Activated naive CD4-positive, alpha-beta T cell treated with anti-CD3 and anti-CD28 coated beads for 36 hours (primary cell): ENCODE measurements at regions of chr2 and their contacts with region 1.

Region 1: GRCh38 chr2:225889446-225889850 is 489.9 kb downstream of the NYAP2 start:
- DNase-seq: no peak
- H3K4me3 Mint-ChIP-seq: no peak overlapping the region
- H3K27ac Mint-ChIP-seq: no peak overlapping the region
- H3K4me1 Mint-ChIP-seq: no peaks in the 10 kb centered on the region
- H3K27me3 Mint-ChIP-seq: peaks cover 14% of the 10 kb centered on the region

Region 2: DNA sequence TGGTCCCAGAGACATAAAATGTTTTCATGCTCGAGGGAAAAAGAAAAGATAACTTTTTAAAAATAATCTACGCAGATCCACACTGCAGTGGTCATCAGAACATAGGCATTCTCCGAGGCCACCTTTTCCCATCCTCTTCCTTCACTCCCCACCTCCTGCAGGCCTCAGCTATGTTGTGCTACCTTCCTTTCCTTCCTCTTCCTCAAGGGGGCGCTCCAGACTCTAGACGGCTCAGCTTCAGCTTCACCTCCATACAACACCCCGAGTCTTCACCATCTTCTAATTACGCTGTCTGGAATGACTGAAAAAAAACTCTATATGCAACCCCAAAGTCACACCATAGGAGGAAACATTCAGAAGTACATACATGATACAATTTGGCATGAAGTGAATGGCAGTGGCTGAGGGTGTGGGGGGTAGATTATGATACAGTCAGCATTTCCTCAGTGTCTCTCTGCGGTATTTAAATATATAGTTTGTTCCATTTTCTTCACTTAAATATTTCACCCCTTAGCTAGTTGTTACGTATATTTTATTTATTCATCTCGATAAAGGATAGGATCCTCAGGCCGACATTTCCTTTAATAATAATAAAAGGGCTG is 326.6 kb after region 1 on chr2:
- CTCF ChIA-PET with region 1: interaction called, 3 read pairs
- intact Hi-C with region 1: loop called (anchors 1 kb)
- DNase-seq: peak; percentile 80
- H3K4me3 Mint-ChIP-seq: no peak overlapping the region
- H3K27ac Mint-ChIP-seq: no peak overlapping the region
- H3K4me1 Mint-ChIP-seq: no peaks in the 10 kb centered on the region
- H3K27me3 Mint-ChIP-seq: no peaks in the 10 kb centered on the region